Heart right ventricle (tissue), 16 donors: ENCODE measurements at regions of chr3 and their contacts with region 1.

Region 1: DNA sequence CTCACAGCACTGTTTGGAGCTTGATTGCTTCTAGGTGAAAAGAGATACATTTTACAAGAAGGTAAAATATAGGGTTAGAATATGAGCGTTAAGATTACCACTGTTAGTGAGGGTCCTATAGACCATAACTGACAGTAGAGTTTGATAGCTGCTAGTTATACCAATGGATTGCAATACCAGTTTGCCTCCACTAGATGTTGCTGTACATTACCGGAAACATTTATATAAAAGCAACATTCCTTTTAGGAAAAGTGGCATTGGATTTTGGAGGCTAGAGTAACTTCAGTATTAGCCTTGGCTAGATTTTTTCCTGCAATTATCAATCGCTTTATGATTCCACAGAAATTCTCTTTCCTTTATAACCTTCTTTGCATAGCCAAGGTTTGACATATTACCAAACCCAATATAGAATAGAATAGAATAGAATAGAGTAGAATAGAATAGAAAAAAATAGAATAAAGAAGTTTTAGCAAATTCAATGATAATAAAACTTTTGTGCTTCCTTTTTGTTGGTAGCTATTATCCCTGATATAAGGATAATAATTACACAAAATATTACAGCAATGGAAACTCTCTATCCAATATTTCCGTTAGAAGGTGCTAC is 1093.6 kb upstream of the ALCAM start:
- DNase-seq: no peak
- ATAC-seq: peak in 1 of 8 donors; percentile 20
- H3K4me3 ChIP-seq: no peak overlapping the region
- H3K27ac ChIP-seq: no peak overlapping the region
- H3K4me1 ChIP-seq: no peaks in the 10 kb centered on the region
- H3K27me3 ChIP-seq: no peaks in the 10 kb centered on the region
- CTCF ChIP-seq: peak; percentile 29 to 74 (median 66)

Region 2: DNA sequence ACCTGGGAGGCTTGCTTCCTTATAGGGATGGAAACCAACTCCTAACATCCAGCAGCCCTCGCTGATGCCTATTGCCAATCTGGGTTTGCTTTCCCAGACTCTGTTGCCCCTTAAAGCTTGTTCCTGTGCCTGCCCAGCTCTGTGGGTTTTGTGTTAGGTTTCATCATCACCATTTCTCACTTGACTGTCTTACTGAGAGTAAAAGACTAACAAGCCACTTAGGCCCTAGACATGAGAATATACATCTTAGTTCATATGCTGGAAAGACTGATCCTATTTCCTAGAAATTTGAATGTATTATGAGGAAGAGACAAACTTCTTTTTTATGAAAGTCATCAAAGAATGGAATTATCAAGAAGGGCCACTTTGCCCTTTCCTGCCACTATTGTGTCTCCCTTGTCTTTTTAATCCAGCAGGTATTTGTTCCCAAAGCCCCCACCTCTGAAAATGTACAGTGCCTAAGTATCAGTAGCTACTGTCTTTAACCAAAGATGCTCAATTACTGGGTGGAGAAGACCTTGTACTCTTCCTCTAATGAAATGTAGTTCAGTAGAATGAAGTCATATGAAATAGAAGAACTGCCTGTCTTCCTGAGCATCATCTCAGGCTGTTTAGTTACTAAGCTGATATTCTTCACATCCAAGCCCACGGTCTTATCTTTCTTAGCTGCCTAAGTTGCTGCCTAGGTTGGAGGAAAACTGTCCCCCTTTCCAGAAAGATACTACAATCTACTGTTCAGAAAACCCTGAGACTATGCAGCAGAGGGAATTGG is 1898.1 kb before region 1 on chr3:
- intact Hi-C with region 1: loop called in 1 of 10 experiments (anchors 5 kb)
- DNase-seq: no peak
- ATAC-seq: no peak
- H3K4me3 ChIP-seq: no peak overlapping the region
- H3K27ac ChIP-seq: no peak overlapping the region
- H3K4me1 ChIP-seq: no peaks in the 10 kb centered on the region
- H3K27me3 ChIP-seq: no peaks in the 10 kb centered on the region
- CTCF ChIP-seq: no peak

Region 3: GRCh38 chr3:104458657-104459056 is 185.5 kb after region 1 on chr3:
- intact Hi-C with region 1: loop called in 1 of 10 experiments (anchors 10 kb)
- DNase-seq: no peak
- ATAC-seq: no peak
- H3K4me3 ChIP-seq: no peak overlapping the region
- H3K27ac ChIP-seq: no peak overlapping the region
- H3K4me1 ChIP-seq: peaks cover 0 to 6% (median 0%) of the 10 kb centered on the region in 9 donors
- H3K27me3 ChIP-seq: no peaks in the 10 kb centered on the region
- CTCF ChIP-seq: no peak

Region 4: DNA sequence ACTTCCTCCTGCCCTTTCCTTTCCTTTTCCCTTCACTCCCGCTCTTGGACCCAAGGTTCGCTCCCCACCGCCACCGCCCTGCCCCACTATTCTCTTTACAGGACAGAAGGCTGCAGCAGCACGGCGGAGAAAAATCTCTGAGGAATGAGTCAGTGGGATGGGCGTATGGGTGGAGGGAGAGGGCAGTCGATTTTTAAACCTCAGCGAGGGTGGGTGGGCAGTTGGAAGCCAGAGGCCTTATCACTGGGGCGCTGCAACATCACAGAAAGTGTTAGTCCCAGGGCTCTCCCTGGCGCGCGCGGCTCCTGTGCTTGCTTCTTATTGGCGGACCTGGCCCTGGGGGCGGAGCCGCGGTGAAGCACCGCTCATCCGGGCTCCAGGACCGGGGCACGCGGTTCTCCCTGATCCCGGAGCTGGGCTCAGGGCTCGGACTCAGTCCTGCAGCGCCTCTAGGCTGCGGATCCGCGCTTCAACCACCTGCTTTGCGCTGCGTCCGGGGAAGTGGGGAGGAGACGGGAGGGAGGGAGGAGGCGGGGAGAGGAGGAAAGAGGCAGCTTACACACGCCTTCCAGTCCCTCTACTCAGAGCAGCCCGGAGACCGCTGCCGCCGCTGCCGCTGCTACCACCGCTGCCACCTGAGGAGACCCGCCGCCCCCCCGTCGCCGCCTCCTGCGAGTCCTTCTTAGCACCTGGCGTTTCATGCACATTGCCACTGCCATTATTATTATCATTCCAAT is 1093.3 kb after region 1 on chr3 and contains the start of gene ALCAM:
- intact Hi-C with region 1: loop called in 2 of 10 experiments (anchors 5 to 10 kb)
- DNase-seq: peak; percentile 81 to 87
- ATAC-seq: peak; percentile 90 to 98 (median 94)
- H3K4me3 ChIP-seq: peak within 1 kb of the TSS; percentile 36 to 77 (median 62)
- H3K27ac ChIP-seq: peak within 1 kb of the TSS in 7 of 10 donors; percentile 23 to 83 (median 45)
- H3K4me1 ChIP-seq: peaks cover 0 to 47% (median 34%) of the 10 kb centered on the region in 9 donors
- H3K27me3 ChIP-seq: peaks cover 0 to 6% (median 0%) of the 10 kb centered on the region in 7 donors
- CTCF ChIP-seq: peak in 6 of 9 donors; percentile 38 to 63 (median 53)
- total RNA-seq, gene ALCAM: 1.8 to 23.9 (median 3.6) TPM

Region 5: GRCh38 chr3:105518806-105519418 is 1245.8 kb after region 1 on chr3:
- intact Hi-C with region 1: loop called in 2 of 10 experiments (anchors 5 to 10 kb)
- DNase-seq: no peak
- ATAC-seq: peak in 4 of 8 donors; percentile 28 to 57 (median 57)
- H3K4me3 ChIP-seq: no peak overlapping the region
- H3K27ac ChIP-seq: no peak overlapping the region
- H3K4me1 ChIP-seq: peaks cover 0 to 3% (median 0%) of the 10 kb centered on the region in 9 donors
- H3K27me3 ChIP-seq: no peaks in the 10 kb centered on the region
- CTCF ChIP-seq: peak; percentile 51 to 80 (median 75)